ENCODE measurements at regions of chr11 and their contacts with region 1.

Region 1: GRCh38 chr11:125141686-125142535 is 22.6 kb upstream of the PKNOX2 start:
- DNase-seq: peak in 1 of 2 experiments; percentile 46
- H3K4me3 ChIP-seq: no peak overlapping the region
- H3K27ac ChIP-seq: no peak overlapping the region
- H3K4me1 ChIP-seq: no peaks in the 10 kb centered on the region
- H3K27me3 ChIP-seq: no peaks in the 10 kb centered on the region
- CTCF ChIP-seq: peak; percentile 100

Region 2: GRCh38 chr11:124970925-124971324 is 171.0 kb before region 1 on chr11:
- CTCF ChIA-PET with region 1: no interaction called
- POLR2A ChIA-PET with region 1: no interaction called
- intact Hi-C with region 1: loop called (anchors 1 kb)
- DNase-seq: peak; percentile 1 to 52
- H3K4me3 ChIP-seq: no peak overlapping the region
- H3K27ac ChIP-seq: no peak overlapping the region
- H3K4me1 ChIP-seq: no peaks in the 10 kb centered on the region
- H3K27me3 ChIP-seq: no peaks in the 10 kb centered on the region
- CTCF ChIP-seq: peak; percentile 48; the same call in 1 of the 2 replicates

Region 3: DNA sequence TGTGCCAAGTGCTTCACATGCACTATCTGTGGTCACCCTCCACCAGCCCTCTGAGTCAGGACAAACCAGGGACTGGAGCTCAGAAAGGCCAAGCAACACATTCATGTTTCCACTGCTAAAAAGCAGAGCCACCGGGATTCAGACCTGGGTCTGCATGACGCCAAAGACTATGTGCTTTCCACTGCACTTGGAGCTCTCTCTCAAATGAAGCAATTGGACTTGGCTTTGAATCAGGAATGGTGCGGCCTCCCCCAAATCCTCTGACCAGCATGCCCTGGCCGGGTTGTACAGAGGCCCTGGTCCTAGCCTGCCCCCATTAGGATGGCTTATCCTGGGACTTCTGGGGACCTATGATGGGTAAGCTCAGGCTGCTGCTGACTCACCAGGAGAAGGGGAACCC is 103.4 kb after region 1 on chr11:
- CTCF ChIA-PET with region 1: no interaction called
- POLR2A ChIA-PET with region 1: no interaction called
- intact Hi-C with region 1: no loop called
- DNase-seq: no peak
- H3K4me3 ChIP-seq: no peak overlapping the region
- H3K27ac ChIP-seq: no peak overlapping the region
- H3K4me1 ChIP-seq: no peaks in the 10 kb centered on the region
- H3K27me3 ChIP-seq: 0 out of 2 replicates have a peak, but pooled peaks cover 5% of the 10 kb centered on the region
- CTCF ChIP-seq: no peak